ENCODE measurements at regions of chr11 and their contacts with region 1.

Region 1: GRCh38 chr11:87110443-87111131 is 72.9 kb downstream of the TMEM135 start:
- DNase-seq: no peak
- ATAC-seq: no peak
- H3K4me3 ChIP-seq: no peak overlapping the region
- H3K27ac ChIP-seq: no peak overlapping the region
- H3K4me1 ChIP-seq: peaks cover 2% of the 10 kb centered on the region
- H3K27me3 ChIP-seq: no peaks in the 10 kb centered on the region

Region 2: DNA sequence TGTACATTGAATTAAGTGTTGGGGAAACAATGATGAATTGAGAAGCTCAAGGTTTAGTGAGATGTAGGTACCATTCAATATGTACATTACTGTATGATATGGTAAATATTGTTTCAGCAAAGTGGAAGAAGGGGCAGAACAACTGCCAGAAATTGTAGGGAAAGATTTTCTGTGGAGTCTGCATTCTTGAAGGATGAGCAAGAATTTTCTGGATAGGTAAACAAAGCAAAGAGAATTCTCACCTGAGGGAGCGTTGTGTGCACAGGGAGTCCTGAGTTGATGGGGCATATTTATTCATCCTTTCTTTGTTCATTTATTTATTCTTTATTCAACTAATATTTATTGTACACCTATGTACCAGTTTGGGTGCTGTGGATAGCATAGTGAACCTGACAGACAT is 10.3 kb after region 1 on chr11:
- intact Hi-C with region 1: loop called in 1 of 4 experiments (anchors 2 kb)
- DNase-seq: no peak
- ATAC-seq: no peak
- H3K4me3 ChIP-seq: no peak overlapping the region
- H3K27ac ChIP-seq: no peak overlapping the region
- H3K4me1 ChIP-seq: no peaks in the 10 kb centered on the region
- H3K27me3 ChIP-seq: no peaks in the 10 kb centered on the region

Region 3: GRCh38 chr11:87374038-87374807 is 263.6 kb after region 1 on chr11:
- intact Hi-C with region 1: no loop called
- DNase-seq: no peak
- ATAC-seq: no peak
- H3K4me3 ChIP-seq: no peak overlapping the region
- H3K27ac ChIP-seq: no peak overlapping the region
- H3K4me1 ChIP-seq: no peaks in the 10 kb centered on the region
- H3K27me3 ChIP-seq: no peaks in the 10 kb centered on the region